Caco-2 (cell line): ENCODE measurements at regions of chr6 and their contacts with region 1.

Region 1: DNA sequence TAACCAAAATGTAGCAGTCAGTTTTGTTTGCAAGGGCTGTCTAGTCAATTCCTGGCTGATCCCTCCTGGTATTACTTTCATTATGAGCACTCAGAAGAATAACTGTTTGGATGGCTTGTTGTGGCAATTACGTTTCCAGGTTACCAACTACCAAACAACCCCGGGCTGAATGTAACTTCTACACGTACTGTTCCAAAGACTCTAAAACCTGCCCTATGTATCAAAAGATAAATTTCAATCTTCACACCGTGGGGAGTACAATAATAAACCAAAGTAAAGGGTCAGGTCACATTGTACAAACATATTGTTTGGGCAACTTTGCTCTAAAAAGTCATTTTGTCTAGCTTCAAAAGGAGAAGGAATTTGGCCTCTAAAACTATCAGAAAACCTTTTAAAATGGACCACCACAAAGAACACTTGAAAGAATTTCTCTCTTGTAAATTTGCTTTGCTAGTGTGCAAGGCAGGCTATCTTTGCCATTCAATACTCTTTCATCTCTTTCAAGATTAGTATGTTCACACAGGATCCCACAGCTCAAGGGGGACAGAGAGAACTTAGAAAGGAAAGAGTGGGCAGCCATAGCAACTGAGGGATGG is 27.6 kb downstream of the DCDC2 start:
- DNase-seq: peak; percentile 51 to 76
- H3K4me3 ChIP-seq: no peak overlapping the region
- H3K4me3 Mint-ChIP-seq: peak overlapping the region; percentile 32
- H3K27ac Mint-ChIP-seq: peak overlapping the region; percentile 93
- H3K4me1 ChIP-seq: peaks cover 82% of the 10 kb centered on the region
- H3K4me1 Mint-ChIP-seq: peaks cover 59% of the 10 kb centered on the region
- H3K27me3 ChIP-seq: no peaks in the 10 kb centered on the region
- H3K27me3 Mint-ChIP-seq: no peaks in the 10 kb centered on the region
- CTCF ChIP-seq: no peak

Region 2: GRCh38 chr6:24340998-24341938 is 11.0 kb after region 1 on chr6:
- CTCF ChIA-PET with region 1: no interaction called
- POLR2A ChIA-PET with region 1: no interaction called
- intact Hi-C with region 1: loop called (anchors 1 kb)
- DNase-seq: peak; percentile 52 to 72
- H3K4me3 ChIP-seq: no peak overlapping the region
- H3K4me3 Mint-ChIP-seq: peak overlapping the region; percentile 55
- H3K27ac Mint-ChIP-seq: peak overlapping the region; percentile 92
- H3K4me1 ChIP-seq: peaks cover 46% of the 10 kb centered on the region
- H3K4me1 Mint-ChIP-seq: peaks cover 66% of the 10 kb centered on the region
- H3K27me3 ChIP-seq: no peaks in the 10 kb centered on the region
- H3K27me3 Mint-ChIP-seq: no peaks in the 10 kb centered on the region
- CTCF ChIP-seq: no peak

Region 3: DNA sequence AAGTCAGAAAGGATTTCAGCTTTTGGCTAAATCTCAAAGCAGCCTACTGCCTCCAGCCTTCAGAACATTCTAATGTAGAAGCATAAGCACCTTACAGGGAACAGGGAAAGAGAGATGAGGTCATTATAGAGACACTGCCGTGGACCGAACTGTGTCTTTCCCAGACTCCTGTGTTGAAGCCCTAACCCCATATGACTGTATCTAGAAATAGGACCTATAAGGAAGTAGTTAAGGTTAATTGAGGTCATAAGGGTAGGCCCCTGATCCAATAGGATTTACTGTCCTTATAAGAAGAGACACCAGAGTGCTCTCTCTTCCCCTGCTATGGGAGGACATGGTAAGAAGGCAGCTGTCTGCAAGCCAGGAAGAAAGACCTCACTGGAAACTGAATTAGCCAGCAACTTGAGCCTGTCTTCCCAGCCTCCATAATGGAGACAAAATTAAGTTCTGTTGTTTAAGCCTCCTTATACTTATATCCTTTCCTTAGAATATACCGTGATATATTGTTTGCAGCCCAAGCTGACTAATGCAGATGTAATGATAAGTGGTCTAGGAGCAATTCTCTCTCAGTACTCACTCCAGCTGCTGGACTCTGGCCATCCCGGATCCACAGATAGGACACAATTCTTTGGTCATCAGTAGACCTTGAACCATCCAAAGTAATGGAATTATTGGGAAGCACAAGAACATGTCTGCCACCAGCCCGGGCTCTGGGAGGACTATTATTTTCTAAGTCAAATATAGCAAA is 236.0 kb after region 1 on chr6:
- CTCF ChIA-PET with region 1: no interaction called
- POLR2A ChIA-PET with region 1: no interaction called
- intact Hi-C with region 1: no loop called
- DNase-seq: no peak
- H3K4me3 ChIP-seq: no peak overlapping the region
- H3K4me3 Mint-ChIP-seq: no peak overlapping the region
- H3K27ac Mint-ChIP-seq: no peak overlapping the region
- H3K4me1 ChIP-seq: no peaks in the 10 kb centered on the region
- H3K4me1 Mint-ChIP-seq: no peaks in the 10 kb centered on the region
- H3K27me3 ChIP-seq: no peaks in the 10 kb centered on the region
- H3K27me3 Mint-ChIP-seq: peaks cover 3% of the 10 kb centered on the region
- CTCF ChIP-seq: no peak